ENCODE measurements at regions of chr6 and their contacts with region 1.

Region 1: DNA sequence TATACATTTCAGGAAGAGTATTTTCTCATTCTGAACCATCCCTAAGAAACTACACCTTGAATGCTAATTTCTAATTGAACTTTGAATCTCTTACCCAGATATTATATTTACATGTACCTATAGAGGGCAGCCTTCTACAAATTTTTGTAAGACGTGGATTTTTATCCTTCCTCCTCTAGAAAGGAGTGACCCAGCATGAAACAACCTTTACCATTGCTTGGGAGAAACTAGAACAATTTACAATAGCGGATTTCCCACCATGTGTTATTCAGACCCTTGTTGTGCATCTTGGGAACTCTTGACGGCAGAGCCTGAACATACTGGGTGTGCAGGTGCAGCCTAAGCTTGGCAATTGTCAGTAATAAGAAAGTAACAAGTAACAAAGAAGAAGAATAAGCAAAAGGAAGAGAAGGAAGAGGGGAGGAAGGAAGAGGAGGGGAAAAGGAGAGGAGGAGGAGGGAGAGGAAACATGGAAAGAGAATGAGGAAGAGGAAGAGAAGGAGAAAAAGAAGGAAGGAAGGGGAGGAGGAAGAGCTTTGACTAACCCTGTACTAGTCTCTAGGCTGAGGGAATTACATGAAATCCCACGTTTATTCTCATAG is 10.8 kb upstream of the TAAR1 start:
- DNase-seq: peak; percentile 19 to 63
- H3K4me3 ChIP-seq: no peak overlapping the region
- H3K27ac ChIP-seq: no peak overlapping the region
- H3K4me1 ChIP-seq: peaks cover 28% of the 10 kb centered on the region
- H3K27me3 ChIP-seq: no peaks in the 10 kb centered on the region
- CTCF ChIP-seq: peak; percentile 84

Region 2: GRCh38 chr6:131597446-131597845 is 1072.3 kb before region 1 on chr6:
- CTCF ChIA-PET with region 1: no interaction called
- POLR2A ChIA-PET with region 1: no interaction called
- intact Hi-C with region 1: no loop called
- DNase-seq: no peak
- H3K4me3 ChIP-seq: no peak overlapping the region
- H3K27ac ChIP-seq: no peak overlapping the region
- H3K4me1 ChIP-seq: no peaks in the 10 kb centered on the region
- H3K27me3 ChIP-seq: no peaks in the 10 kb centered on the region
- CTCF ChIP-seq: peak; percentile 50; the same call in 1 of the 2 replicates

Region 3: DNA sequence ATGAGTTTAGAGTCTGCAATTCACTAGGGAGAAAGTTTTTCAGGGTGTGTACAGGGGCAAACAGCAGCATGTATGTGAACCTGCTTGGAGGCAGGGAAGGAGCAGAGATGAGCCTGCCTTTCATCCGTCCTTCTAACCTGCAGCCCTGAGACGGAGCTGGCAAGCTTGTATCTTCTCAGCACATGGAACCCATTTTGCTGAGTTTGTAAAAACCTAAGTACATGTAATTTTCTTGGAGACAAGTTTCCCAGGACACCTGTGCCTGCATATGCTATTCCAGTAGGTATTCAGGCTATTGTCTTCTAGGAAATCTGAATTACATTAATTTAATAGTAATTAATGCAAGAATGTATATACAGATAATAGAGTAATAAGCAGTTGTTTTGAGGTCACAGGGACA is 239.7 kb before region 1 on chr6:
- CTCF ChIA-PET with region 1: no interaction called
- POLR2A ChIA-PET with region 1: no interaction called
- intact Hi-C with region 1: no loop called
- DNase-seq: no peak
- H3K4me3 ChIP-seq: no peak overlapping the region
- H3K27ac ChIP-seq: no peak overlapping the region
- H3K4me1 ChIP-seq: no peaks in the 10 kb centered on the region
- H3K27me3 ChIP-seq: no peaks in the 10 kb centered on the region
- CTCF ChIP-seq: no peak

Region 4: GRCh38 chr6:132512638-132513632 is 156.9 kb before region 1 on chr6 and contains the start of gene STX7:
- CTCF ChIA-PET with region 1: no interaction called
- POLR2A ChIA-PET with region 1: no interaction called
- intact Hi-C with region 1: loop called (anchors 5 kb)
- DNase-seq: peak; percentile 90 to 97
- H3K4me3 ChIP-seq: peak within 1 kb of the TSS; percentile 71
- H3K27ac ChIP-seq: peak within 1 kb of the TSS; percentile 63
- H3K4me1 ChIP-seq: peaks cover 28% of the 10 kb centered on the region
- H3K27me3 ChIP-seq: no peaks in the 10 kb centered on the region
- CTCF ChIP-seq: no peak
- total RNA-seq, gene STX7: 33.3 and 40.7 TPM in 2 replicates

Region 5: GRCh38 chr6:132687306-132687705 is 17.5 kb after region 1 on chr6:
- CTCF ChIA-PET with region 1: interaction called, 14 read pairs
- POLR2A ChIA-PET with region 1: interaction called, 3 read pairs
- intact Hi-C with region 1: no loop called
- DNase-seq: peak in 1 of 2 experiments; percentile 14
- H3K4me3 ChIP-seq: no peak overlapping the region
- H3K27ac ChIP-seq: no peak overlapping the region
- H3K4me1 ChIP-seq: no peaks in the 10 kb centered on the region
- H3K27me3 ChIP-seq: no peaks in the 10 kb centered on the region
- CTCF ChIP-seq: no peak

Region 6: DNA sequence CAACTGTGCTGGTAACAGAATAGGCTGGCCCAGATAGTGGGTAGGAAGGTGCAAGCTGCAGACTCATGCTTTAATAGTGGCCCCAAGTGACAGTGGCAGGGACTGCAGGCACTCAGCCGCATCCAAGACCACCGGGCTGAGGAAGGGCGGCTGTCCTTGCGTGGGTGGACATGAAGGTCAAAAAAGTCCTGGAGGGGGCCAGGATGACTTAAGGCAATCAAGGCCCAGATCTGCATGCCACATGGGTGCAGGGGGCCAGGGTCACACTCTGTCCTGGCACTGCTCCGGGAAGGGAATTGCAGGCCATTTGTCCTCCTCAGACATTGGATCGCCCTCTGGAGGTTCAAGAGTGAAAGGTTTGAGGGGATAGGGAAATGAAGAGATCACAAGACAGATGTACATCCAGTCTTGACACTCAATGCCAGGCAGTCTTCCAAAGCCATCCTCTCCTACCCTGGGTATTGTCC is 98.3 kb after region 1 on chr6:
- CTCF ChIA-PET with region 1: interaction called, 4 read pairs
- POLR2A ChIA-PET with region 1: no interaction called
- intact Hi-C with region 1: loop called (anchors 2 kb)
- DNase-seq: peak in 1 of 2 experiments; percentile 15
- H3K4me3 ChIP-seq: no peak overlapping the region
- H3K27ac ChIP-seq: no peak overlapping the region
- H3K4me1 ChIP-seq: peaks cover 17% of the 10 kb centered on the region
- H3K27me3 ChIP-seq: no peaks in the 10 kb centered on the region
- CTCF ChIP-seq: peak; percentile 71

Region 7: GRCh38 chr6:132780770-132781371 is 111.1 kb after region 1 on chr6:
- CTCF ChIA-PET with region 1: interaction called, 3 read pairs
- POLR2A ChIA-PET with region 1: no interaction called
- intact Hi-C with region 1: loop called (anchors 5 kb)
- DNase-seq: no peak
- H3K4me3 ChIP-seq: no peak overlapping the region
- H3K27ac ChIP-seq: no peak overlapping the region
- H3K4me1 ChIP-seq: no peaks in the 10 kb centered on the region
- H3K27me3 ChIP-seq: no peaks in the 10 kb centered on the region
- CTCF ChIP-seq: peak; percentile 73

Region 8: DNA sequence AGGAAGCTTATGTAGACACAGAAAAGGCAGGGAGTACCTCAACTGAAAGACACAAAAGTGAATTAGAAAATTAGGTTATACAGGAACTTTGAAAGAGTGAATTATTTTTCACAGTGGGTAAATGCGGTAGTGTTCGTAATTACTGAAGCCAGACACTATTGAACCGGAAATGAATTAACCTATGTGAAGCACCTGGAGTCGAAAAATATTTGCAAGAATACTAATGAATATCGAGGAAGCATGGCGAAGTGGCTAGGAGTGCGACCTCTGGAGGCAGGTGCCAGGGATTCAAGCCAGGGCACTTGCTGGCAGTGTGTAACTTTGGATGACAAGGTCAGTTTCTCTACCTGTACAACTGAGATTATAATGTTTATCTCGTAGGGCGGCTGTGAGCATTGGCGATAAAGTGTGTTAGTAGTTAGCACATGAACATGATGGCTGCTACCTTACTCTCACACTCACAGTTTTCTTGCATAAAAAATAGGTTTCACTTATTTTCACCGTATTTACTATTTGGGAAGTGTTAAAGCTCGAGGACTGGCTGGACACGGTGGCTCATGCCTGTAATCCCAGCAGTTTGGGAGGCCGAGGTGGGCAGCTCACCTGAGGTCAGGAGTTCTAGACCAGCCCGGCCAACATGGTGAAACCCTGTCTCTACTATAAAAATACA is 129.2 kb after region 1 on chr6:
- CTCF ChIA-PET with region 1: interaction called, 3 read pairs
- POLR2A ChIA-PET with region 1: interaction called, 11 read pairs
- intact Hi-C with region 1: no loop called
- DNase-seq: peak; percentile 78 to 85
- H3K4me3 ChIP-seq: no peak overlapping the region; the same call in 1 of the 2 replicates
- H3K27ac ChIP-seq: no peak overlapping the region
- H3K4me1 ChIP-seq: peaks cover 7% of the 10 kb centered on the region
- H3K27me3 ChIP-seq: no peaks in the 10 kb centered on the region
- CTCF ChIP-seq: peak; percentile 91